PC-9 (cell line): ENCODE measurements at regions of chr4 and their contacts with region 1.

Region 1: GRCh38 chr4:114296126-114296525 is 302.5 kb upstream of the UGT8 start:
- DNase-seq: no peak
- H3K4me3 ChIP-seq: no peak overlapping the region
- H3K27ac ChIP-seq: no peak overlapping the region
- H3K4me1 ChIP-seq: no peaks in the 10 kb centered on the region
- H3K27me3 ChIP-seq: no peaks in the 10 kb centered on the region
- CTCF ChIP-seq: no peak

Region 2: GRCh38 chr4:114349543-114350175 is 53.5 kb after region 1 on chr4:
- CTCF ChIA-PET with region 1: no interaction called
- POLR2A ChIA-PET with region 1: interaction called, 11 read pairs
- intact Hi-C with region 1: no loop called
- DNase-seq: no peak
- H3K4me3 ChIP-seq: no peak overlapping the region
- H3K27ac ChIP-seq: no peak overlapping the region
- H3K4me1 ChIP-seq: no peaks in the 10 kb centered on the region
- H3K27me3 ChIP-seq: no peaks in the 10 kb centered on the region
- CTCF ChIP-seq: no peak

Region 3: DNA sequence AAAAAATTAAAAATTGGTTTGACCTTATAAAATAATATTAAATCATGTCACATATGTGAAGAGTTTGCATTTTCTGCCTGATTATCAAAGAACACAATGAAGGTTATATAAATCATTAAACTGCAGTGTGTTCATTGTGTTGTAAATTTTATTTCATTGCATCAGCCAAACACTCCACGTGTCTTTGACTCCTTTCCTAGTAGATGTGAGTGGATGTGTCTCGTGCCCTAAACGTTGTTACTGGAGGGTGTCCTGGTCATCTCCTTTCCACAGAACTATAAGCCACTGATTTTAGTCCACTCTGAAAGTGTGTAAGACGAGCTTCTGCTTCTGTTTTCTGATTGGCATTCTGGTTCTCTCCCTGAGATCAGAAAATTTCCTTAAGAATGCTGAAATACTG is 690.0 kb after region 1 on chr4:
- CTCF ChIA-PET with region 1: no interaction called
- POLR2A ChIA-PET with region 1: no interaction called
- intact Hi-C with region 1: no loop called
- DNase-seq: no peak
- H3K4me3 ChIP-seq: no peak overlapping the region
- H3K27ac ChIP-seq: no peak overlapping the region
- H3K4me1 ChIP-seq: no peaks in the 10 kb centered on the region
- H3K27me3 ChIP-seq: no peaks in the 10 kb centered on the region
- CTCF ChIP-seq: no peak